Ascending aorta (tissue), 2 donors: ENCODE measurements at regions of chr3 and their contacts with region 1.

Region 1: DNA sequence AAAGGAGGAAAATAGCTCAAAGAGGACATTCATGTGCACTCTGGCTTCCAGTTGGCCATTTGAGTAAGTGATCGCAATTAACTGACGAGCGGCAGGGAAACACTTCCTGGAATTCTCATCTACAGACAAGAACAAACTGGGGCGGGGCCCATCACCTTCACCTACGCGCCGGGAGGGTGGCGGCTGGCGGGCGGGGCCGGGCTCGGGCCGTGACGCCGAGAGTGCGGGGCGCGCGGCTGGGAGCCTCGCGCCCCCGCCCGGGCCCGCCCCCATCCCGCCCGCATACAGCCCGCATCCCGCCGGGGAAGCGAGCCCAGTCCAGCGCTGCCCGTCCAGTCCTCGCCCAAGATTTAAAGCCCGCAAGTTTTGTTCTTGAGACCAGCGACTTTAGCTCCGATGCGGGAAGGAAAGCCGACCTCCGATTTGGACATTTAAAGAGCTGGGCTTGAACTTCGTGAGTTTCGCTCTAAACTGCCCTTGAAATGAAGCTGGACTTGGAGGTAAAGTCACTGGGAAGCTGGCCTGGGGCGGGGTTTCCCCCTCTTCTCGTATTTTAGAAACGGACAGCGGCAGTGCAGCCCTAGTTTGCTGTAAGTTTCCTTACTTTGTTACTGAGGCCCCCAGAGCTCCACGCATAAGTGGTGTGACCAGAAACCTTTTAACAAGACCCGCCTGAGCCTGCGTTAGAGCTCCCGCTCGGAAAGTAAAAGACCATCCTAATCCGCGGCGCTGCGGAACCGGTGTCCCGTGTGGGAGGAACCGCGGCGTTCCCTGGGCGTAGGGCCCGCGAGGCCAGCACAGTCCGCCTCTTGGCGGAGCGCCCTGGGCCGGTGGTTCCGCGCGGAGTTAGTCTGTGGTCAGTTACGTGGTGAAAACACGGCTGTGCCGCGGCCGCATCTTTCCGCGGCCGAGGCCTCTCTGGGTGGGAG is at the start of gene B3GNT5:
- DNase-seq: peak in 1 of 2 donors; percentile 84
- H3K4me3 ChIP-seq: peak within 1 kb of the TSS; percentile 78 to 96
- H3K27ac ChIP-seq: peak within 1 kb of the TSS; percentile 65 to 77
- H3K4me1 ChIP-seq: peaks cover 0 to 2% of the 10 kb centered on the region in 2 donors
- H3K27me3 ChIP-seq: no peaks in the 10 kb centered on the region
- CTCF ChIP-seq: no peak
- total RNA-seq, gene B3GNT5: 0.11 TPM

Region 2: DNA sequence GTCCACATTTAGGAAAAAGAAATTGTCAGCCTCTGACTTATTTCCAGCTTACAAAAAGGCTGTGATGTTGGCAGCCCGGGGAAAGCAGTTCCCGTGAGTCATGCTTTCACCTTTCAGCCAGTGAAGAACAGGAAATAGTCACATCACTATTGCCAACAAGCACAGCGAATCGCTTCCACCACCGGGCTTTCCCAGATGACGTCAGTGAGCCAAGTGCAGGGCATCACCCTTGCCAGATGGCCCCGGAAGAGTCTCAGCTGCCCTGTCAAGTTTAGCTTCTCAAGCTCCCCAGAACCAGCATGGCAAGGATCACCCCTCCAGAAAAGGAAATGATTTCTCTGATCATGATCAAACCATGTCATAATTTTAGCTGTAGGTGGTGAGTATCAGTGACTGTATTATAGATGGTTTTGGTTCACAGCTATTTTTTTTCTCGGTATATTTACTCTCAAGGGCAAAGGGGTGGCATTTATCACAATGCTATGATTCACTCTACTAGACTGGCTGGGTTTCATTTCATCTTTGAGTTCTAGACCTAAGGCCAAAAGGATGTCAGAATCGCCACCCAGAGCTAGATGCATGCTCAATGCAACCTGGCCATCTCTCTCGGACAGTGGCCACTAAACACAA is 32.7 kb after region 1 on chr3:
- intact Hi-C with region 1: loop called (anchors 2 kb)
- DNase-seq: peak; percentile 90 to 97
- H3K4me3 ChIP-seq: no peak overlapping the region
- H3K27ac ChIP-seq: peak overlapping the region; percentile 83 to 89
- H3K4me1 ChIP-seq: peaks cover 5 to 27% of the 10 kb centered on the region in 2 donors
- H3K27me3 ChIP-seq: no peaks in the 10 kb centered on the region
- CTCF ChIP-seq: no peak